K562 (cell line): ENCODE measurements at regions of chrX and their contacts with region 1.

Region 1: DNA sequence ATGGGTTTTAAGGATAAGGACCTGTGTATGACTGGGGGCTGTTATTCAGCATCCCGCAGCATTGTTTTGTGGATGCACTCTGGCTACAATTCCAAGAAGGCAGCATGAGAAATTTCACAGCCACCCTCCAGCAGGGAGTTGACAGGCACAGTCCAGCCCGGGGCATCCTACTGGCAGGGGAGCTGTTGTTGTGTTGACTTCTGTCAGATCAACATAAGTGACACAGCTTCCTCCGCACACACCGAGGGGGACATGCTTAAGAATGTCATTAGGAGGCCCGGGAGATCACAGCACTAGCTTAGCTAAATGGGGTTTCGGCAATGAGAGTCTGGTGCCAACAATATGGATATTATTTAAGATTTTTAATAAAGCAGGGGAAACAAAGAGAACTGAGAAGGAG is 326.5 kb downstream of the ASMT start:
- DNase-seq: no peak
- ATAC-seq: no peak
- H3K4me3 ChIP-seq: no peak overlapping the region
- H3K27ac ChIP-seq: no peak overlapping the region
- H3K4me1 ChIP-seq: no peaks in the 10 kb centered on the region
- H3K27me3 ChIP-seq: no peaks in the 10 kb centered on the region; a peak in 1 of 5 replicates
- CTCF ChIP-seq: no peak
- EP300 ChIP-seq: no peak
- POLR2A ChIP-seq: no peak
- RAD21 ChIP-seq: no peak

Region 2: DNA sequence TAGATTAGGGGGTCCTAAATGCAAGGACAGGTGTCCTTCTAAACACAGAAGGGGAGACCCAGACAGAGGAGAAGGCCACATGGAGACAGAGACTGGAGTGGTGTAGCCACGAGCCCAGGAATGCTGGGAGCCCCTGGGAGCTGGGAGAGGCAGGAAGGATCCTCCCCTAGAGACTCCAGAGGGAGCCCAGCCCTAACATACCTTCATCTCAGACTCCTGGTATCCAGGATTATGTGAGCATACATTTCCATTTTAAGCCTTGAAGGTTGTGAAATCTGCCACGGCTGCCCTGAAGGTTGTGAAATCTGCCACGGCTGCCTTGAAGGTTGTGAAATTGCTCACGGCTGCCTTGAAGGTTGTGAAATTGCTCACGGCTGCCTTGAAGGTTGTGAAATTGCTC is 178.0 kb before region 1 on chrX:
- CTCF ChIA-PET with region 1: no interaction called
- POLR2A ChIA-PET with region 1: no interaction called
- in situ Hi-C with region 1: no loop called
- intact Hi-C with region 1: no loop called
- DNase-seq: no peak
- ATAC-seq: no peak
- H3K4me3 ChIP-seq: no peak overlapping the region
- H3K27ac ChIP-seq: no peak overlapping the region
- H3K4me1 ChIP-seq: no peaks in the 10 kb centered on the region
- H3K27me3 ChIP-seq: no peaks in the 10 kb centered on the region; a peak in 1 of 5 replicates
- CTCF ChIP-seq: no peak
- EP300 ChIP-seq: no peak
- POLR2A ChIP-seq: no peak
- RAD21 ChIP-seq: no peak

Region 3: DNA sequence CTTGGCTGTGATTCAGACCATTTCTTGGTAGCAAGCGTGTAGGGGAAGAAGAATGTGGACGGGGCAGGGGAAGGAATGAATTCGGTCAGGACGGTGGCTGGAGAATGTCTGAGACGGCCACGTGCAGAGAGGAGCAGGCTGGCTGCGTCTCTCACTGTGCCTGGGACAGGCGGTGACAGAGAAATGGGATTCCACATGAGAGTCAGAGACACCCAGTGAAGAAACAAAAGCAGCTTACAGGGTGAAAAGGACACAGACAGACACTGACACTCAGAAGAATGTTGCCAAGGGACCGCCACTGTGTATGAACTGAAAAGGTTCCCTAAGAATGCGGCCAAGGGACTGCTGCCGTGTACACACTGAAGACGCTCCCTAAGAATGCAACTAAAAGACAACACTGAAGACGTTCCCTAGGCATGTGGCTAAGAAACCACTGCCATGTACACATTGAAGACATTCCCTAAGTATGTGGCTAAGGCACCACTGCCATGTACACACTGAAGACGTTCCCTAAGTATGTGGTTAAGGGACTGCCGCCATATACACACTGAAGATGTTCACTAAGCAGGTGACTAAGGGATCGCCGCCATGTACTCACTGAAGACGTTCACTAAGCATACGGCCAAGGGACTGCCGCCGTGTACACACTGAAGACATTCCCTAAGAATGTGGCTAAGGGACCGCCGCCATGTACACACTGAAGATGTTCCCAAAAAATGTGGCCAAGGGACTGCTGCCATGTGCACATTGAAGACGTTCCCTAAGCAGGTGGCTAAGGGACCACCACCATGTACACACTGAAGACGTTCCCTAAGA is 510.4 kb after region 1 on chrX:
- CTCF ChIA-PET with region 1: no interaction called
- POLR2A ChIA-PET with region 1: no interaction called
- in situ Hi-C with region 1: loop called (anchors 10 kb)
- intact Hi-C with region 1: no loop called
- DNase-seq: peak; percentile 20 to 85 (median 35)
- ATAC-seq: peak; percentile 85
- H3K4me3 ChIP-seq: peak overlapping the region; percentile 23
- H3K27ac ChIP-seq: peak overlapping the region; percentile 92
- H3K4me1 ChIP-seq: no peaks in the 10 kb centered on the region; a peak in 3 of 5 replicates
- H3K27me3 ChIP-seq: no peaks in the 10 kb centered on the region
- CTCF ChIP-seq: no peak
- EP300 ChIP-seq: no peak
- POLR2A ChIP-seq: no peak
- RAD21 ChIP-seq: peak in 1 of 2 experiments; percentile 41; a peak in 2 of 4 replicates